Heart left ventricle (tissue), 16 donors: ENCODE measurements at regions of chr6 and their contacts with region 1.

Region 1: GRCh38 chr6:105992315-105992961 is 93.7 kb upstream of the PRDM1 start:
- DNase-seq: peak; percentile 76 to 92 (median 84)
- ATAC-seq: peak; percentile 83 to 95 (median 95)
- H3K4me3 ChIP-seq: peak overlapping the region; percentile 53 to 78 (median 62)
- H3K27ac ChIP-seq: peak overlapping the region in 6 of 12 donors; percentile 24 to 96 (median 54)
- H3K4me1 ChIP-seq: peaks cover 0 to 37% (median 15%) of the 10 kb centered on the region in 12 donors
- H3K27me3 ChIP-seq: peaks cover 26 to 100% (median 84%) of the 10 kb centered on the region in 9 donors
- CTCF ChIP-seq: no peak
- POLR2A ChIP-seq: peak in 1 of 2 donors; percentile 22

Region 2: GRCh38 chr6:105509506-105510331 is 482.7 kb before region 1 on chr6:
- intact Hi-C with region 1: loop called in 1 of 10 experiments (anchors 10 kb)
- DNase-seq: peak in 4 of 5 donors; percentile 36 to 68 (median 52)
- ATAC-seq: peak; percentile 65 to 77 (median 76)
- H3K4me3 ChIP-seq: no peak overlapping the region
- H3K27ac ChIP-seq: peak overlapping the region in 4 of 12 donors; percentile 16 to 64 (median 46)
- H3K4me1 ChIP-seq: peaks cover 0 to 30% (median 14%) of the 10 kb centered on the region in 12 donors
- H3K27me3 ChIP-seq: no peaks in the 10 kb centered on the region
- CTCF ChIP-seq: peak in 9 of 12 donors; percentile 24 to 64 (median 38)
- POLR2A ChIP-seq: no peak

Region 3: DNA sequence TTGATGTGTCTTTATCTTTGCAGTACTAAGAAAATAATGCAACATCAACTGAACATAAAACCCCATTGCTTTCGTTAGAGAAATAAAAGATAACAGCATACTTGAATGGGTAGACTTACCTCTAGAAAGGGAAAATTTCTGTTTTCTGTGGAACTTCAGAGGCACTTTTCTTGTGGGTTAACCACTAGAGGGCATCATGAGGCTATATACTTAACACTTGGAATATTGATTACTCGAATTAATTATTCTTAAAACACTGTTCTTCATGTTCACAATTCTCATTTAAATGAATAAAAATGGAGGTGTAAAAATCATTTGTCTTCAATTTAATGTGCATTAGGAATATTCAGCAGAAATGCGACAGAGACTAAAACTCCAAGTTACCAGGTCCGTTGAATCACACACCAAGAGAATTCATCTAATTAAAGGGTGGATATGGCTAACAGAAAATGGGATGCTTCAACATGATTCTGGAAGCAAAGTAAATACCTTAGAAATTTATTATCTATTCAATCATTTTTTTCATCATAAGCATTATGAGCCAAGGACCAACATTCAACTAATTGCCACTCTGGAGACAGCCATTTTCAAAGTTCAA is 258.8 kb before region 1 on chr6:
- intact Hi-C with region 1: loop called in 2 of 10 experiments (anchors 10 kb)
- DNase-seq: no peak
- ATAC-seq: no peak
- H3K4me3 ChIP-seq: no peak overlapping the region
- H3K27ac ChIP-seq: no peak overlapping the region
- H3K4me1 ChIP-seq: peaks cover 0 to 4% (median 0%) of the 10 kb centered on the region in 12 donors
- H3K27me3 ChIP-seq: no peaks in the 10 kb centered on the region
- CTCF ChIP-seq: peak; percentile 51 to 78 (median 60)
- POLR2A ChIP-seq: no peak

Region 4: DNA sequence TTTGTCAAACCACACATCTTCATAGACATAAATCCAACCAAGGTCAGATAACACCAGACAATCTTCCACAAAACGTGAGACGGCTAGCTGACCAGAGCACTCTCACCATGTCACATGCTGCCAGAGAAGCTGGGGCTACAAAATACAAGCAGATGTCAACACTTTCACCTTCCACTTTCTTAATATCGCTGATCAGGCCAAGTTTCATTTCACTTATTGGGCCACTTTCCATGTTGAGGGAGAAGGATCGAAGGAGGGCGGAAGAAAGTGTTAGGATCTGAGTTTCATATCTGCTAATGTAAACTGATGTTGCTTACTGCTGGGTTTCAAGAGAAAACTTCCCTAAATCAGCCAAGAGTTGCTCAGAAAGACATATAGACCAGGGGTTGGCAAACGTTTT is 83.3 kb before region 1 on chr6:
- intact Hi-C with region 1: no loop called
- DNase-seq: peak in 2 of 5 donors; percentile 20 to 36
- ATAC-seq: peak; percentile 24 to 72 (median 50)
- H3K4me3 ChIP-seq: no peak overlapping the region
- H3K27ac ChIP-seq: peak overlapping the region in 2 of 12 donors; percentile 22 to 86
- H3K4me1 ChIP-seq: peaks cover 0 to 45% (median 3%) of the 10 kb centered on the region in 12 donors
- H3K27me3 ChIP-seq: no peaks in the 10 kb centered on the region
- CTCF ChIP-seq: no peak
- POLR2A ChIP-seq: no peak

Region 5: GRCh38 chr6:106085984-106086813 is 93.8 kb after region 1 on chr6 and contains the start of gene PRDM1:
- intact Hi-C with region 1: loop called in 7 of 10 experiments (anchors 5 to 10 kb)
- DNase-seq: peak; percentile 66 to 89 (median 81)
- ATAC-seq: peak; percentile 49 to 82 (median 76)
- H3K4me3 ChIP-seq: peak within 1 kb of the TSS; percentile 12 to 66 (median 52)
- H3K27ac ChIP-seq: peak within 1 kb of the TSS; percentile 8 to 87 (median 58)
- H3K4me1 ChIP-seq: peaks cover 0 to 76% (median 7%) of the 10 kb centered on the region in 12 donors
- H3K27me3 ChIP-seq: peaks cover 0 to 62% (median 12%) of the 10 kb centered on the region in 9 donors
- CTCF ChIP-seq: peak in 6 of 12 donors; percentile 3 to 20 (median 14)
- POLR2A ChIP-seq: peak in 1 of 2 donors; percentile 38
- total RNA-seq, gene PRDM1: 1.0 to 10.8 (median 1.7) TPM

Region 6: GRCh38 chr6:106325336-106326178 is 333.1 kb after region 1 on chr6 and contains the start of gene ATG5:
- intact Hi-C with region 1: loop called in 1 of 10 experiments (anchors 10 kb)
- DNase-seq: peak; percentile 99 to 100 (median 99)
- ATAC-seq: peak; percentile 97 to 99 (median 98)
- H3K4me3 ChIP-seq: peak within 1 kb of the TSS; percentile 65 to 97 (median 80)
- H3K27ac ChIP-seq: peak within 1 kb of the TSS; percentile 82 to 95 (median 86)
- H3K4me1 ChIP-seq: peaks cover 3 to 19% (median 13%) of the 10 kb centered on the region in 12 donors
- H3K27me3 ChIP-seq: peaks cover 0 to 7% (median 0%) of the 10 kb centered on the region in 9 donors
- CTCF ChIP-seq: no peak
- POLR2A ChIP-seq: peak; percentile 15 to 79
- total RNA-seq, gene ATG5: 12.6 to 23.9 (median 14.3) TPM